ENCODE measurements at regions of chr9 and their contacts with region 1.

Region 1: DNA sequence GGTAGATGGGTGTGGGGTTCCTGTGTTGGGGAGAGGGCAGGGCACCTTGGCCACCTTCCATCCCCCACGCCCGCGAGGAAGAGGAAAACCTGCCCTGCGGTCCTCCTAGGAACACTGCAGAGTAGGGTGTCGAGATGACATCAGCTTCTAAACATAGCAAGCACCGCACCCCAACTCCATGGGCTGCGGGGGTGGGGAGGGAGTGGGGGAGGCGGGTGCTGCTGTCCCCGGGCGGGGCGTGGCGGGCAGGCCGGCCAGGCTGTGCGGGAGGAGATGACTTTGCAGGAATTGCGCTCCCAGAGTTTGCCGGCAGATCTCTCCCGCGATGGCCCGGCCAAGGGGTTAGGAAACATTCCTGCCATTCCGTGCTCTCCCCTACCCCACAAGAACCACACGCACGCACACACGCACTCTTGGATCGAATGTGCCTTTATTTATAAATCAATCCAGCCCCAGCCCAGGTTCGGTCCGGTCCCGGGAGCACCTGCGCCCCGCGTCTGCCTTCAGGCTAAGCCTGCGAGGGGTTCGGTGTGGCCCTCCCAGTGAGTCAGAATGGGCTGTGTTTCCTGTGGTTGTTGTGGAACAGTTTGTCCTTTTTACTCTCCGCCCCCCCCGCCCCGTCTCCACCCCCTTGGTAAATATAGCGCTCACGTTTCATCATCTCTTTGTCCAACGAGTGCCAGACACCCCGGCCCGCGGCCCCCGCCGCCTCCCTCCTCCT is 5.2 kb upstream of the KLF9 start:
- DNase-seq: peak; percentile 92
- ATAC-seq: peak; percentile 47
- H3K4me3 Mint-ChIP-seq: peak overlapping the region; percentile 91
- H3K27ac Mint-ChIP-seq: peak overlapping the region; percentile 100
- H3K4me1 Mint-ChIP-seq: peaks cover 49% of the 10 kb centered on the region
- H3K27me3 Mint-ChIP-seq: no peaks in the 10 kb centered on the region

Region 2: GRCh38 chr9:70466976-70467561 is 47.4 kb after region 1 on chr9:
- CTCF ChIA-PET with region 1: interaction called, 3 read pairs
- POLR2A ChIA-PET with region 1: interaction called, 8 read pairs
- intact Hi-C with region 1: loop called (anchors 1 to 2 kb)
- DNase-seq: peak; percentile 71
- ATAC-seq: peak; percentile 92
- H3K4me3 Mint-ChIP-seq: no peak overlapping the region
- H3K27ac Mint-ChIP-seq: peak overlapping the region; percentile 51
- H3K4me1 Mint-ChIP-seq: peaks cover 55% of the 10 kb centered on the region
- H3K27me3 Mint-ChIP-seq: no peaks in the 10 kb centered on the region

Region 3: GRCh38 chr9:70484210-70485130 is 64.8 kb after region 1 on chr9:
- CTCF ChIA-PET with region 1: interaction called, 10 read pairs
- POLR2A ChIA-PET with region 1: interaction called, 3 read pairs
- intact Hi-C with region 1: loop called in 1 of 2 experiments (anchors 5 kb)
- DNase-seq: no peak
- ATAC-seq: peak; percentile 63
- H3K4me3 Mint-ChIP-seq: no peak overlapping the region
- H3K27ac Mint-ChIP-seq: no peak overlapping the region
- H3K4me1 Mint-ChIP-seq: peaks cover 9% of the 10 kb centered on the region
- H3K27me3 Mint-ChIP-seq: no peaks in the 10 kb centered on the region